ENCODE measurements at regions of chr17 and their contacts with region 1.

Region 1: GRCh38 chr17:55865072-55865762 is 114.4 kb downstream of the PCTP start:
- DNase-seq: no peak
- H3K4me3 ChIP-seq: no peak overlapping the region
- H3K27ac ChIP-seq: no peak overlapping the region
- H3K4me1 ChIP-seq: no peaks in the 10 kb centered on the region
- H3K27me3 ChIP-seq: no peaks in the 10 kb centered on the region
- CTCF ChIP-seq: no peak

Region 2: DNA sequence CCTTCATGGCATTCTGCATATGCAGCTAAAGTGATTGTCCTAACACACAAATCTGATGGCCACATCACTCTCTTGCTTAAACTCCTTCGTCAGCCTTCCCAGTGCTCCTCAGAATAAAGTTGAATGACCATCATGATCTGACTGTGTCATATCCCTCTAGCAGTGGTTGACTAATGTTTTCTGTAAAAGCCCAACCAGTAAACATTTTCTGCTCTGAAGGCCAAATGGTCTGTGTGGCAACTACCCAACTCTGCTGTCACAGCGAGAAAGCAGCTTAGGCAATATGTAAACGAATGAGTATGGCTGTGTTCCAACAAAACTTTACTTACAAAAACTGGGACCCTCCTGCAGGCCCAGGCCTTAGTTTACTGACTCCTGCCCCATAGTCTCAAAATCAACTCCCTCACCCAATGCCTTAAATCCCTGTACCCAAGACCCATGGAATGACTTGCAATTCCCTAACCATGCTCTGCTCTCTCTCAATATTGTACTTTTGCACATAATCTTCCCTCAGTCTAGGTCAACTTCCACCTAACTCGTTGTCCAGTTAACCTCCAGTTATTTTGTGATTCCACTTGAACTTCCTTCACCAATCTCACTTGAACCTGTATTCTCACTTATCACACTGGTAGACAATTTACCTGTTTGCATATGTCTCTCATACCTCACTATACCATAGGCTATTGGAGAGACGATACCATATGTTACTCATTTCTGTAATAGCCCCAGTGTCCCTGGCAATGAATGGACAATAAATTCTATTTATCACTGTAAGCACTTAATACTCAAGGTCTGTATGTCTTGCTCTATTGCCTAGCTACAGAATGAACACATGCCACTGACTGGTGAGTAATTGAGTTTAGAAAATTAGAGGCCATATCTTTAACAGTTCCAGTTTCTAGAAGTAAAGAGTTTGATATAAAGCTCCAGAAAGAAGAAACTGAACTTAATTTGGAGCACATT is 171.7 kb before region 1 on chr17:
- CTCF ChIA-PET with region 1: no interaction called
- POLR2A ChIA-PET with region 1: no interaction called
- intact Hi-C with region 1: no loop called
- DNase-seq: no peak
- H3K4me3 ChIP-seq: no peak overlapping the region
- H3K27ac ChIP-seq: no peak overlapping the region
- H3K4me1 ChIP-seq: no peaks in the 10 kb centered on the region
- H3K27me3 ChIP-seq: peaks cover 78% of the 10 kb centered on the region
- CTCF ChIP-seq: no peak

Region 3: DNA sequence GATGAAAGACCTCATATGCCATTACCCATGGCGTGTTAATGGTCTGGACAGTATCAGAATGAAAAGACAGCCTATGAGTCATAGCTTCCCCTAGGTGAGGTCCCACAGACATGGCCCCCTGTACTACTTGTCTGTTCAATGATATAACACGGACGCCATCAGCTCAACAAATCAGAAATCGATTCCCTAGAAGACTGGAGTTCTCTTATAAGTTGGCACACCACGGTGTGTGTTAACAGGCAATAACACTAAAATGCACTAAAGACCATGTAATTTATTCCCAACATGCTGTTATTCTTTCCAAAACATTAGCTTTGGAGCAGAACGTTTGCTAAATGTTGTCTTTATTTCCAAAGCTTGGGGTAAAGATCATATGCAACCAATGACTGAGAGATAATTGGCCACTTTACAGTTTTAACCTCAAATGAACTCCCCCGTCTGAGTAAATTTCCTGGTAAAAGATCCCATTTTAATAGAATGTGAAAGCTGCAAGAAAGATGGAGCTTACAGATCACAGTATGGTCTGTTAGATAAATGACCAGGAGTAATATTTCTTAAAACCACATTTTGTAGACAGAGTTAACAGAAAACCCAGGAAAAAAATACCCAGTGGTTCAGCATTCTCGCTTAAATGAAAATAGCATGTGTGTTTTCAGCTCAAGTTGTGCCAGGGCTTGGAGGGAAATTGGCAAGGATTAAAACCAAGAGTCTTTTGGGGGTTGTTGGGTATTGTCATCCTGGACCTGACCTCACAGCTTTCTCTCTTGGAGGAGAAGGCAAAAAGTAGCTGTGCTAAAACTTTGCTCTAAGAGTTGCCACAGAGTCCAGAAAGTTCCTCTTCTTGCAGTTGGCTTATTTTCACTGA is 48.5 kb before region 1 on chr17:
- CTCF ChIA-PET with region 1: no interaction called
- POLR2A ChIA-PET with region 1: interaction called, 11 read pairs
- intact Hi-C with region 1: no loop called
- DNase-seq: no peak
- H3K4me3 ChIP-seq: no peak overlapping the region
- H3K27ac ChIP-seq: no peak overlapping the region
- H3K4me1 ChIP-seq: no peaks in the 10 kb centered on the region
- H3K27me3 ChIP-seq: peaks cover 51% of the 10 kb centered on the region
- CTCF ChIP-seq: no peak